Activated T-helper 1 cell treated with anti-CD3 and anti-CD28 coated beads, Interleukin-12 subunit alpha, Interleukin-12 subunit beta, Interleukin-2, Interleukin-4 antibody, amounts not matched to agents 30 ng/mL and 10 ng/mL and 1 ng/mL, durations not matched to agents 14 hours and 24 hours and 36 hours (primary cell): ENCODE measurements at regions of chr21 and their contacts with region 1.

Region 1: GRCh38 chr21:35088319-35088771 is 39.2 kb upstream of the RUNX1 start:
- DNase-seq: no peak
- H3K4me3 Mint-ChIP-seq: no peak overlapping the region
- H3K27ac Mint-ChIP-seq: peak overlapping the region; percentile 89
- H3K4me1 Mint-ChIP-seq: peaks cover 36% of the 10 kb centered on the region
- H3K27me3 Mint-ChIP-seq: no peaks in the 10 kb centered on the region

Region 2: GRCh38 chr21:35059742-35060141 is 28.6 kb before region 1 on chr21:
- intact Hi-C with region 1: loop called (anchors 2 kb)
- DNase-seq: no peak
- H3K4me3 Mint-ChIP-seq: no peak overlapping the region
- H3K27ac Mint-ChIP-seq: no peak overlapping the region
- H3K4me1 Mint-ChIP-seq: peaks cover 39% of the 10 kb centered on the region
- H3K27me3 Mint-ChIP-seq: peaks cover 5% of the 10 kb centered on the region

Region 3: DNA sequence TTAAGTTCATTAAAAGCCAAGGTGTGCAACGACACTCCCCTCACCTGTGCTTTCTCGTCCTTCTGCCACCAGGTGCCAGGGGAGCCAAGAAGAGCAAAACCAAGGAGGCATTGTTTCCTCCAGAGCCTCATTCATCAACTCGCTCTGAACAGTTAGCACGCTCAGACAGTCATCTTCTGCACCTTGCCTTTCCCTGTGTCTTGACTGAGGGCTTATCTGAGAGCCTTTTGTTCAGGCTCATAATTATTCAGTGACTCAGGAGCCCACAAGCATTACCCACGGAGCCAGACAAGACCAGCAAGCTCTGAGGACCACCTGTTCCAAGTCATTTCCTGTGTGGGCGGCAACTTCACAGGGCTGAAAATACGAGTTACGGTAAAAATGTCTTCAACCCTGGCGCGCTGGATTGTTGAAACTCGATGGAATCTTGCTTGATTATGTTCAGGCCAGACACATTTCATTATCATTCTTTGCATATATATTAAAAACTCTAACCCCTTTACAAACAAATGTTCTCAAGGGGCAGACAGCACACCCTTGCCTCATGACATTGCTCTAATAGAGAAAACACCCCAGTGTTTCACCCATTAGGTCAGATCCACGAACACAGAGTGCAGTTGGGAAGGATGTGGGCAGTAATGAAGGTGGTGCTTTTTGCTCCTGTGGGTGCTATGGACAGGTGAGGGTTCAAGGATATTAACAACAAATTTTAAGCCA is 50.5 kb after region 1 on chr21:
- intact Hi-C with region 1: loop called (anchors 1 kb)
- DNase-seq: no peak
- H3K4me3 Mint-ChIP-seq: peak overlapping the region; percentile 62
- H3K27ac Mint-ChIP-seq: peak overlapping the region; percentile 93
- H3K4me1 Mint-ChIP-seq: peaks cover 27% of the 10 kb centered on the region
- H3K27me3 Mint-ChIP-seq: no peaks in the 10 kb centered on the region

Region 4: DNA sequence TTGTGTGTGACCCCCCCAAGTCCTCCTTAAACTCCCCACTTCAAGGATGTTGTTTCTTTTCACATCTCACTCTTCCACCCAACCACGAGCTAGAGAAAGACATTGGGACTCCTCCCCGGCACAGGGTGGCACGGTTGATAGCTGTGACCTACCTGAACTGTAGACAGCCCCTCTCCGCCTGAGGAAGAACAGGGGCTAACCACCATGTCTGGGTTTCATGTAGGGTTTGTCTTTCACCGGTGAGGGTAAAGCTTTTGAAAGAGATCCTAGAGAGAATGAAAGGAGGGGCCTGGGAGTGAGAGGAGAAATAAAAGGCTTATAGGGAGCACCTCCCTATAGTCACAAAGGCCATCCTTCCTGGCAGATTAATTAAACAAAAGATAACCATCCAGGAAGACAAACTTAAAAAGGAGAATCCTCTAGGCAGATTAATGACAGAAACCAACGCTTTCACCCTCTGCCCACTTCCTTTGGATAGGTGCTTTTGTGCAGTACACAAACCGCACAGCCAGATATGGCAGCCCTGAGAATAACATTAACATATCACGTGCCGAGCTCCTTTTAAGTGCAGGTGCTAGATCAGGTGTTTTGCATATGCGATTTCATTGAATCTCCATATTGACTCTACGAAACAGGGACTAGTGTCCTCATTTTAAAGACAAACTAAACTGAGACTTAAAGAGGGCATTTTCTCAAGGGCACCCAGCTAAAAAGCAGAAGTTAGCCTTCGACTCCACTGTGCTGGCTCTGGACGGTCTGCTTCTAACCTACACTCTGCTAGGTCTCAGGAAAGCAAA is 138.8 kb after region 1 on chr21:
- intact Hi-C with region 1: loop called (anchors 2 kb)
- DNase-seq: peak; percentile 42
- H3K4me3 Mint-ChIP-seq: peak overlapping the region; percentile 27
- H3K27ac Mint-ChIP-seq: peak overlapping the region; percentile 6
- H3K4me1 Mint-ChIP-seq: peaks cover 41% of the 10 kb centered on the region
- H3K27me3 Mint-ChIP-seq: peaks cover 10% of the 10 kb centered on the region

Region 5: DNA sequence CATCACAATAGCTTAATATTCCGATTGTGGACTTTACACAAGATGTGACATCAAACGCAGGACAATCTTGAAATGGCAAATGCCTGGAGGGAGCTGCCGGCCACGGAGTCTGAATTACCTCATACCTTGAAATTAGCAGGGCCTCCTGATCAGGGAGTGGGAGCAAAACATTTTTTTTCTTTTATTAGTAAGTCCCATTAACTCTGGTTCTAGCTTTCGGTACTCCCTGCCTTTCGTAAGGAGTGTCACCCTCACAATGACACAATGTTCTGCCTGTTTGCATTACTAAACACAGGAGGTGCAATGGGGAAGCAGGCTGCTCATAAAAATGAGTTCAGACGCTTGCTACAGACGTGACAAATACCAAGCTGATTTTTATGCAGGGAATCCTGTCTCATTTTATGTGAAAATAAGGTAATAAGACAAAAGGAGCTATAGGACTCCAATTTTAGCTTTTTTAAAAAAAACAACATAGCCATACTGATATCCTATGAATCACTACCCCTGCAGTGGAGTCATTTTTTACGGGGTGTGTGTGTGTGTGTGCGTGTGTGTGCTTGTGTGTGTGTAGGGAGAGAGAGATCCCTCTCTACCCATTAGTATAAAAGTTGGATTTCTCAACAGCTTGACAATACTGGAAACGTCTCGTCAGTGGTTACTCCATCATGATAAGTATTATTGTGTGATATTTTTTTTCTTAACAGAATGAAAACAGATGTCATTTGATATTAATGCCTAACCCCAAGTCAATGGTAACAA is 165.8 kb after region 1 on chr21:
- intact Hi-C with region 1: loop called (anchors 2 kb)
- DNase-seq: no peak
- H3K4me3 Mint-ChIP-seq: no peak overlapping the region
- H3K27ac Mint-ChIP-seq: no peak overlapping the region
- H3K4me1 Mint-ChIP-seq: peaks cover 13% of the 10 kb centered on the region
- H3K27me3 Mint-ChIP-seq: no peaks in the 10 kb centered on the region

Region 6: GRCh38 chr21:35528116-35529042 is 440.0 kb after region 1 on chr21:
- intact Hi-C with region 1: loop called (anchors 1 kb)
- DNase-seq: peak; percentile 26
- H3K4me3 Mint-ChIP-seq: peak overlapping the region; percentile 84
- H3K27ac Mint-ChIP-seq: peak overlapping the region; percentile 93
- H3K4me1 Mint-ChIP-seq: peaks cover 64% of the 10 kb centered on the region
- H3K27me3 Mint-ChIP-seq: no peaks in the 10 kb centered on the region